Breast epithelium (tissue), 4 donors: ENCODE measurements at regions of chr1 and their contacts with region 1.

Region 1: DNA sequence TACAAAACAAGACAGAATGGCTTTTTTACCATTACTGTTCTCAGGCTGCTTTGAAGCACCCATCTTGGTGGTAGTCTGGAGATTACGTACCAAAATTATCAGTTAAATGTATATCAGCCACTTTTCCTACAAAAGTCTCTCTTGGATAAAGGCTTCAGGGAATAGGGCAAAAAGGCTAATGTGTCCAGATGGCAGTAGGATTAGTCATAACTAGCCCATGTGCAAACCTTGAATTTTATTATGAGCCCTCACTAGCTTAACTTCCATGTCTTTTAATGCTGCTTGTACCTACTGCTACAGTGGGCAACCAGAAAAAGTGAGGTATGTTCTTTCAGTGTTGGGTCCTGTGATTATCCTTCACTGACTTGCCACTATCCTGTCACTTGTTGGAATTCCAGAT is 51.0 kb downstream of the PLPPR4 start:
- DNase-seq: no peak
- H3K4me3 ChIP-seq: no peak overlapping the region
- H3K27ac ChIP-seq: no peak overlapping the region
- H3K4me1 ChIP-seq: no peaks in the 10 kb centered on the region
- H3K27me3 ChIP-seq: no peaks in the 10 kb centered on the region
- CTCF ChIP-seq: no peak
- POLR2A ChIP-seq: no peak

Region 2: GRCh38 chr1:98181036-98181764 is 1134.1 kb before region 1 on chr1:
- intact Hi-C with region 1: no loop called
- DNase-seq: no peak
- H3K4me3 ChIP-seq: no peak overlapping the region
- H3K27ac ChIP-seq: no peak overlapping the region
- H3K4me1 ChIP-seq: no peaks in the 10 kb centered on the region
- H3K27me3 ChIP-seq: no peaks in the 10 kb centered on the region
- CTCF ChIP-seq: no peak
- POLR2A ChIP-seq: no peak

Region 3: GRCh38 chr1:98940722-98941079 is 374.6 kb before region 1 on chr1:
- intact Hi-C with region 1: no loop called
- DNase-seq: no peak
- H3K4me3 ChIP-seq: no peak overlapping the region
- H3K27ac ChIP-seq: no peak overlapping the region
- H3K4me1 ChIP-seq: no peaks in the 10 kb centered on the region
- H3K27me3 ChIP-seq: no peaks in the 10 kb centered on the region
- CTCF ChIP-seq: no peak
- POLR2A ChIP-seq: no peak

Region 4: DNA sequence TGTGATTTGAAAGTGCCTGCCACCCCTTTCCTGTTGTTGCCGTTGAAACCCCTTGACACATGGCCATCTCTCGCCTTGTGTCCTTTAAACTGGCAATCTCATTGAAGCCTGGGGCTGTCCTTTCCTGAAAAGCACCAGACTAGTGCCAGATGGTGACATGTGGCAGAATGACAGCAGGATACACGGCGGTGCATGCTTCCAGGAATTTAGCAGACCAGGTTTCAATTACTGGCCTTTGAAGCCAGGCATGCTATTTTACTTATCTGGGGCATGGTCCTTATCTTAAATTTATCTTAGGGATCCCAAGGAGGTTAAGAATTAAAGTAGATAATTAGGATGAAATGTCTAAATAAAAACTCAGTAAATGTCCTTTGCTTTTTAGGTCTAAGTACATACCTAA is 35.8 kb before region 1 on chr1:
- intact Hi-C with region 1: no loop called
- DNase-seq: no peak
- H3K4me3 ChIP-seq: no peak overlapping the region
- H3K27ac ChIP-seq: no peak overlapping the region
- H3K4me1 ChIP-seq: no peaks in the 10 kb centered on the region
- H3K27me3 ChIP-seq: no peaks in the 10 kb centered on the region
- CTCF ChIP-seq: no peak
- POLR2A ChIP-seq: no peak

Region 5: GRCh38 chr1:100001462-100001861 is 686.2 kb after region 1 on chr1:
- intact Hi-C with region 1: loop called (anchors 5 kb)
- DNase-seq: no peak
- H3K4me3 ChIP-seq: no peak overlapping the region
- H3K27ac ChIP-seq: no peak overlapping the region
- H3K4me1 ChIP-seq: no peaks in the 10 kb centered on the region
- H3K27me3 ChIP-seq: no peaks in the 10 kb centered on the region
- CTCF ChIP-seq: no peak
- POLR2A ChIP-seq: no peak